Right ventricle myocardium superior (tissue), 1 donor: ENCODE measurements at regions of chr7 and their contacts with region 1.

Region 1: GRCh38 chr7:69962186-69963065 is 364.2 kb downstream of the AUTS2 start:
- DNase-seq: peak; percentile 70
- ATAC-seq: peak; percentile 91

Region 2: GRCh38 chr7:70027867-70028266 is 65.4 kb after region 1 on chr7:
- intact Hi-C with region 1: loop called (anchors 10 kb)
- DNase-seq: no peak
- ATAC-seq: no peak

Region 3: DNA sequence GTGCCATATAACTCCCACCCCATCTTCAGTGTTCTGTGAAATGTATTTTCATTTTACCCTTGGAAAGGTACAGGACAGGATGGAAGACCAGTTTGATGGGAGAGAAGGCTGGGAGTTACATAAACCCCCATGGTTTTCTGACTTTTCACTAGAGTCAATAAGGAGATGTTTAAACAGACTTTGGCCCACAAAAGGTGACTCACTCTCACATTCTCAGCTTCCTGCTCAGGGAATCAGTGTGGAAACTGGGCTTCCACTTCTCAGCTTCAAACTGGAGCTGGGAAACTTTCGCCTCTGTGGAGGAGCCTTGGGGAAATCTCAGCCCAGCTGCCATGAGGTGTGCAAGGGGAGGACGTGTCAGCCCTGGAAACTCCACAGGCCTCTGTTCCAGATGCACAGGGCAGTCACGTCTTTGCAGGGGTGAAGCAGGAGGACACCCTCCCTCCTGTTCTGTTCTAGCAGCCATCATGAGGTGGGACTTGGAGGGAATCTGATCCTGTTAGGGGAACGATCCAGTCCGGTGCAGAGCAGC is 609.0 kb after region 1 on chr7:
- intact Hi-C with region 1: no loop called
- DNase-seq: no peak
- ATAC-seq: no peak